ENCODE measurements at regions of chr10 and their contacts with region 1.

Region 1: DNA sequence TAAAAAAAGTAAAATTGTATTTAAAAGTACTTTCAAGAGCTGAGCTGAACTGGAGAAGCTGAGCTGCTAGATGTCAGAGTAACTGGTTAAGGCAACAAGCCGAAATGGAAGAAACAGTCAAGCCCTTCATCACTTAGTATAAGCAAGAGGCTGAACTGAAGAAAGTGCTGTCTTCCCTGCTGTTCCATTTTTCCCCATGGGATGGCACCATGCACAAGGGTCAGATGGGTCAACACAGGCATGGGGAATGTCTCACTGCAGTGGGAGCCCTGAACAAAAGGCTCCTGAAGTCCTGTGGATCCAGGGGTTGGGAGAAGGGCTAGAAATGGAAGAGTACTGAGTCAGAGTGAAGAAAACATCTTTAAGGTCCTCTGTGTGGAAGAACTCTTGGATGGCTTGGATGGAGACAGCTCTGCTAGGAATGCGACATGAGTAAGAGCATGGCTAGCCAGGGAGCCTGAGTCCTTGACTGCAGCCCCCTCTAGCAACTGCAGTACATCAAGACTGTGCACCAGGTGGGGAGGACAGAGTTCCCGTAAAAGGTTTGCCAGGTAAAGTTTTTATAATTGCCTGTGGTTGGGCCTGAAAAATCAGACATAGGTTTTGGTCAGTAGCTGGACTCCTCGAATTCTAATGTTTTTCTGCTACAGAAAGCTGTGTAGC is 348.3 kb downstream of the GPR158 start:
- DNase-seq: peak; percentile 49
- H3K4me3 Mint-ChIP-seq: no peak overlapping the region
- H3K27ac Mint-ChIP-seq: no peak overlapping the region
- H3K4me1 Mint-ChIP-seq: no peaks in the 10 kb centered on the region
- H3K27me3 Mint-ChIP-seq: peaks cover 14% of the 10 kb centered on the region
- CTCF ChIP-seq: no peak

Region 2: GRCh38 chr10:25393621-25394020 is 129.5 kb before region 1 on chr10:
- CTCF ChIA-PET with region 1: no interaction called
- intact Hi-C with region 1: no loop called
- DNase-seq: no peak
- H3K4me3 Mint-ChIP-seq: no peak overlapping the region
- H3K27ac Mint-ChIP-seq: no peak overlapping the region
- H3K4me1 Mint-ChIP-seq: no peaks in the 10 kb centered on the region
- H3K27me3 Mint-ChIP-seq: no peaks in the 10 kb centered on the region
- CTCF ChIP-seq: no peak

Region 3: GRCh38 chr10:25713894-25714240 is 190.8 kb after region 1 on chr10:
- CTCF ChIA-PET with region 1: no interaction called
- intact Hi-C with region 1: loop called (anchors 2 kb)
- DNase-seq: no peak
- H3K4me3 Mint-ChIP-seq: no peak overlapping the region
- H3K27ac Mint-ChIP-seq: no peak overlapping the region
- H3K4me1 Mint-ChIP-seq: peaks cover 8% of the 10 kb centered on the region
- H3K27me3 Mint-ChIP-seq: peaks cover 34% of the 10 kb centered on the region
- CTCF ChIP-seq: no peak